Activated B cell treated with CpG ODN at 0.5 μM for 24 hours (primary cell): ENCODE measurements at regions of chr5 and their contacts with region 1.

Region 1: GRCh38 chr5:139197710-139198669 is at the start of gene SIL1:
- DNase-seq: peak; percentile 91
- ATAC-seq: peak; percentile 98
- H3K4me3 Mint-ChIP-seq: peak within 1 kb of the TSS; percentile 91
- H3K27ac Mint-ChIP-seq: peak within 1 kb of the TSS; percentile 90
- H3K4me1 Mint-ChIP-seq: peaks cover 21% of the 10 kb centered on the region
- H3K27me3 Mint-ChIP-seq: no peaks in the 10 kb centered on the region
- CTCF ChIP-seq: no peak
- total RNA-seq, gene SIL1: 16.1 and 22.0 TPM in 2 replicates

Region 2: DNA sequence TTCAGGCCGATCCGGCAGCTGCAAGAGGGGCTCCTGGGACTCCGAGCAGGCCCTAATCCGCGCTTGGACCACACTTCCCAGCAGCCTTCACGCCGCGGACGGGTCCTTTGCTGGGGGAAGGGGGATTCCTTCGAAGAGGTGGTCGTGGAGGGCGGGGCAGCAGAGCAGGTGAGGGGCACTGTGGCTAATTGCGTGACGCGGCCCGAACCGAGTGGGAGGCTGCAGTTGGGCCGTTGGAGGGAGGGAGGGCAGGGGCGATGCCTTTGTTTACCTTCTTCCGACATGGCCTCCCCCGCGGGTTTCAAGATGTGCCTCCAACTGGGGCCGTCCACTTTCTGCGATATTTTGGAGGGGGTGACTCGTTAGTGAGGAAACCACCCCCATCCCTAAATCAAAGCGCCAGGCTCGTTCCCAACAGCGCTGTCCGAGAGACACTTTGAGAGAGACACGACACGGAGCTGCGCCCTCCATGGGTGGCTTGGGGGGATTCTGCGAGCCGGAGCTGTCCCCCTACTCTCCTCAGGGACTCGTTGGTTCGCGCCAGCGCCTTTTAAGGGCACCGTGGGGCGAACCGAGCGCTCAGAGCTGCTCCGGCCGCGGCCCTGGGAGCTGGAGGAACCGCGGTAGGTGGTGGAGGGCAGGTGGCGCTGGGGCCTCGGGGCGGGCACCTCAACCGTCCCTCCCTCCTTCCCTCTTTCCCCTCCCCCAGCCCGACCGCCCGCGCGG is 860.1 kb before region 1 on chr5 and contains the start of gene FAM53C:
- CTCF ChIA-PET with region 1: no interaction called
- POLR2A ChIA-PET with region 1: no interaction called
- intact Hi-C with region 1: loop called (anchors 5 kb)
- DNase-seq: peak; percentile 97
- ATAC-seq: peak; percentile 81
- H3K4me3 Mint-ChIP-seq: peak within 1 kb of the TSS; percentile 90
- H3K27ac Mint-ChIP-seq: peak within 1 kb of the TSS; percentile 100
- H3K4me1 Mint-ChIP-seq: peaks cover 37% of the 10 kb centered on the region
- H3K27me3 Mint-ChIP-seq: no peaks in the 10 kb centered on the region
- CTCF ChIP-seq: no peak
- total RNA-seq, gene FAM53C: 23.5 and 24.9 TPM in 2 replicates

Region 3: GRCh38 chr5:139293504-139294373 is 95.7 kb after region 1 on chr5 and contains the start of gene MATR3:
- CTCF ChIA-PET with region 1: interaction called, 3 read pairs
- POLR2A ChIA-PET with region 1: interaction called, 14 read pairs
- intact Hi-C with region 1: no loop called
- DNase-seq: peak; percentile 87
- ATAC-seq: peak; percentile 90
- H3K4me3 Mint-ChIP-seq: peak within 1 kb of the TSS; percentile 97
- H3K27ac Mint-ChIP-seq: peak within 1 kb of the TSS; percentile 96
- H3K4me1 Mint-ChIP-seq: peaks cover 48% of the 10 kb centered on the region
- H3K27me3 Mint-ChIP-seq: no peaks in the 10 kb centered on the region
- CTCF ChIP-seq: no peak
- total RNA-seq, gene MATR3: 242 and 294 TPM in 2 replicates

Region 4: GRCh38 chr5:139985733-139986132 is 787.7 kb after region 1 on chr5:
- CTCF ChIA-PET with region 1: no interaction called
- POLR2A ChIA-PET with region 1: no interaction called
- intact Hi-C with region 1: no loop called
- DNase-seq: no peak
- ATAC-seq: no peak
- H3K4me3 Mint-ChIP-seq: no peak overlapping the region
- H3K27ac Mint-ChIP-seq: no peak overlapping the region
- H3K4me1 Mint-ChIP-seq: peaks cover 5% of the 10 kb centered on the region
- H3K27me3 Mint-ChIP-seq: peaks cover 18% of the 10 kb centered on the region
- CTCF ChIP-seq: no peak